SK-N-SH (cell line): ENCODE measurements at regions of chr20 and their contacts with region 1.

Region 1: DNA sequence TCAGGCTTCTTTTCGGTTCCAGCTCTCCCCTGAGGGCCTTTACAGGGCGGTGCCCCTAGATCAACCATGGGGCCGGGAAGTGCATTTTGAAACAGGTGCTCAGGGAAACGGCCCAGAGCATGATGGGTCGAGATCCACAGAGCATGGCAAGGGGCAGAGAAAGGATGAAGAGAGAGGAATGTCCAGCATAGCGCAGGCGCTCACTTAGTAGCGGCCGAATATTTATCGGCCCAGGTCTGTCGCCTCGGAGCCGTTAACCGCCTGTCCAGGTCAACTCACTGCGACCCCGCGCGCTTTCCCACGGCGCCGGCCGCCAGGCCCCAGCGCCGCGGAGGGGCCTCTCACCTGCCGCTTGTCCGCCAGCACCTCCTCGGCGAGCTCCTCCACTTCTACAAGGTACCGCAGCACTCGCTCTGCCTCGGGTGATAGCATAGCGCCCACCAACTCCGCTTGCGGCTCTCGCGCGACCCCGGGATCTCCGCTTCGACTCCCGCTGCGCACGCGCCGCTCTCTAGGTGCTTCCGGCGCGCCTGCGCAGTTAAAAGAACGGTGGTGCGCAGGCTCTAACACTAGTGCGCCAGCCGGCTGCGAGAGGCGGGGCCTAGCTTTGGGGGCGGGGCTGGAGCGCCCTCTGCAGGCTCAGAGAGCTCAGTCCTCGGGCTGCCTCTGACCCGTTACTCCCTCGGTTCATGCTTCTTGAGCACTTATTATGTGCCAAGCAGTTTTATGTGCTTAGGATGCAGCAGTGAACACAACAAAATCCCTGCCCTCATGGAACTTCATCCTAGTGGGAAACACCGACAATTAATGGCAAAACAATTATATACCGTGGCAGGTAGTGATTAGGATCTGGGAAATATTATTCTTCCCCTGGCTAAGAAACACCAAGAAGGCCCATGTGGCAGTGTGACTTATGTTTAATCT is at the start of gene PDRG1:
- DNase-seq: peak; percentile 98
- H3K4me3 ChIP-seq: peak within 1 kb of the TSS; percentile 88 to 91
- H3K27ac ChIP-seq: peak within 1 kb of the TSS; percentile 40 to 75; a peak in 3 of 4 replicates
- H3K4me1 ChIP-seq: peaks cover 7 to 12% of the 10 kb centered on the region in 2 experiments; a peak in 3 of 4 replicates
- H3K27me3 ChIP-seq: no peaks in the 10 kb centered on the region
- CTCF ChIP-seq: peak; percentile 90
- EP300 ChIP-seq: no peak
- RAD21 ChIP-seq: peak; percentile 91
- polyA plus RNA-seq, gene PDRG1: 18.9 and 19.7 TPM in 2 replicates

Region 2: GRCh38 chr20:31835977-31836852 is 115.6 kb before region 1 on chr20:
- CTCF ChIA-PET with region 1: interaction called, 15 read pairs
- POLR2A ChIA-PET with region 1: no interaction called
- DNase-seq: peak; percentile 57
- H3K4me3 ChIP-seq: no peak overlapping the region
- H3K27ac ChIP-seq: peak overlapping the region; percentile 62 to 88; a peak in 3 of 4 replicates
- H3K4me1 ChIP-seq: peaks cover 37 to 51% of the 10 kb centered on the region in 2 experiments
- H3K27me3 ChIP-seq: no peaks in the 10 kb centered on the region
- CTCF ChIP-seq: no peak
- EP300 ChIP-seq: peak in 1 of 2 experiments; percentile 94; a peak in 3 of 4 replicates
- RAD21 ChIP-seq: no peak

Region 3: DNA sequence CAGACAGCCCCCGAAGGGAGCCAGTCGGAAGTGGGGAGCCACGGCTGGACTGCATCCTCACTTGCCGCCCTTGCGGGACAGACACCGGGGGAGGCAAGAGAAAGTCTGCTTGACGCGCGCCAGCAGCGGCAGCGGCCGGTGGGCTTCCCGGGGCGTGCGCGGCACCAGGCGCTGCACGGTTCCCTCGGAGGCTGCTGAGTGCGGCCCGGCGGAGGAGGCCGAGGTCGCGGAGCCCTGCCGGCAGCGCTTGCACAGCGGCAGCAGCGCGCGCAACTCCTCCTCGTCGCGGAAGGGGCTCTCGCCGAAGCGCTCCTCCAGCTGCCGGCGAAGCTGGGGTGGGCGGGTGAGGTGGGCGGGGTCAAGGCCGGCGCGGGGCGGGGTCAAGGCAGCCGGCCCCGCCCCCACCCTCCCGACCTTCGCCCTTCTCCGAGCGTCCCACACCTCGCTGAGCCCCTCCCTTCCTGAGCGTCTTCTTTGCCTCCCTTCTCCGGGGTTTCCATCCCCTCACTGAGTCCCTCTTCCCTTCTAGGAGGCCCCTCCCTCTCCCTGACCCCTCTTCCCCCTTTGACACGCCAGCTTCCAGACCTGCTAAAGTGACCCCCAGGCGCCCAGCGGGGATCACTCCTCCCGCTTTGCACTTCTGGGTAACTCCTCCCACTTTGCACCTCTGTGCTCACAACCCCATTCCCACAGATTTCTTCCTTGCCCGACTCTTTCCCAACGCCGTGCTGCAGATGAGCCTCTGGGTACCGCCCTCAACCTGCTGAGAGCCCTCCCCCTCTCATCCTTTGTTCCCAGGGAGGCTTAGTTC is 90.2 kb before region 1 on chr20:
- CTCF ChIA-PET with region 1: interaction called, 158 read pairs
- POLR2A ChIA-PET with region 1: interaction called, 7 read pairs
- DNase-seq: peak; percentile 99
- H3K4me3 ChIP-seq: peak overlapping the region; percentile 62 to 63
- H3K27ac ChIP-seq: peak overlapping the region in 1 of 2 experiments; percentile 82; a peak in 2 of 4 replicates
- H3K4me1 ChIP-seq: peaks cover 0 to 21% of the 10 kb centered on the region in 2 experiments; a peak in 2 of 4 replicates
- H3K27me3 ChIP-seq: no peaks in the 10 kb centered on the region
- CTCF ChIP-seq: no peak
- EP300 ChIP-seq: no peak
- RAD21 ChIP-seq: no peak

Region 4: DNA sequence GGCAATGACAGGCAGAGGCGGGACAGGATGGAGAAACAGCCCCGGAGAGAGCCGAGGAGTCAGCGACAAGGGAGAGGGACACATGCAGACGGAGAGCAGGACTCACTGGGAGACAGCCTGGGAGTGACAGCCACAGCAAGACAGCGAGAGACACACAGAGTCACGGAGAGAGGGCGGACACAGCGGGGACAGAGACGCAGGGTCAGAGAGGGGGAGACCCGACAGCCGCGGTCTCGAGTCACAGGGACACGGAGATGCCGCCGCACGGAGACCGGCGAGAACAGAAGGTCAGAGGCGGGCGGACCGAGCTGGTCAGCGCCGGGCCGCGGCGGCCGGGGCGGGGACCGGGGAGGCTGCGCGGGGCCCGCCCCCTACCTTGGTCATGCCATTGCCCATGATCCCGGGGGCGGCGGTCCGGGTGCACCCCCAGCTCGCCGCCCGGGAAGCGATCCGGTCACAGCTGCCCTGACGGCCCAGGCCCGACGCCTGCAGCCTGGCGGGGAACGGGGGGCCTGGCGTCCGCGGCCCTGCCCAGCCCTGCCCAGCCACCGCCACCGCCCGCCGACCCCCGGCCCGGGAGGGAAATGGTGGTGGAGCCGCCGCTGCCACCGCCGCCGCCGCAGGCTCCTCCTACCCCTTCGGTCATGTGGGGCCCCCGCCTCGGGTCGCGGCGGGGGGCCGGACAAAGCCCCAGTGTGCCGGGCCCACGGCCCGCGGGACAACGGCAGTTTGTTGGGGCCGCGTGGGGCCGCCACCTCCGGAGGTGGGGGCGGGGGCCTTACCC is 81.7 kb before region 1 on chr20 and contains the starts of genes DUSP15 and TTLL9:
- CTCF ChIA-PET with region 1: interaction called, 16 read pairs
- POLR2A ChIA-PET with region 1: no interaction called
- DNase-seq: peak; percentile 90
- H3K4me3 ChIP-seq: peak within 1 kb of the TSS; percentile 66 to 69
- H3K27ac ChIP-seq: peak within 1 kb of the TSS in 1 of 2 experiments; percentile 62; a peak in 1 of 4 replicates
- H3K4me1 ChIP-seq: peaks cover 0 to 23% of the 10 kb centered on the region in 2 experiments; a peak in 1 of 4 replicates
- H3K27me3 ChIP-seq: no peaks in the 10 kb centered on the region
- CTCF ChIP-seq: no peak
- EP300 ChIP-seq: no peak
- RAD21 ChIP-seq: no peak
- polyA plus RNA-seq, gene DUSP15: 4.3 and 5.4 TPM in 2 replicates
- polyA plus RNA-seq, gene TTLL9: 0.23 and 0.32 TPM in 2 replicates

Region 5: GRCh38 chr20:31962761-31963160 is 11.0 kb after region 1 on chr20:
- CTCF ChIA-PET with region 1: interaction called, 18 read pairs
- POLR2A ChIA-PET with region 1: interaction called, 6 read pairs
- DNase-seq: peak; percentile 48
- H3K4me3 ChIP-seq: no peak overlapping the region
- H3K27ac ChIP-seq: no peak overlapping the region
- H3K4me1 ChIP-seq: peaks cover 0 to 16% of the 10 kb centered on the region in 2 experiments; a peak in 1 of 4 replicates
- H3K27me3 ChIP-seq: peaks cover 49% of the 10 kb centered on the region
- CTCF ChIP-seq: no peak
- EP300 ChIP-seq: no peak
- RAD21 ChIP-seq: no peak

Region 6: DNA sequence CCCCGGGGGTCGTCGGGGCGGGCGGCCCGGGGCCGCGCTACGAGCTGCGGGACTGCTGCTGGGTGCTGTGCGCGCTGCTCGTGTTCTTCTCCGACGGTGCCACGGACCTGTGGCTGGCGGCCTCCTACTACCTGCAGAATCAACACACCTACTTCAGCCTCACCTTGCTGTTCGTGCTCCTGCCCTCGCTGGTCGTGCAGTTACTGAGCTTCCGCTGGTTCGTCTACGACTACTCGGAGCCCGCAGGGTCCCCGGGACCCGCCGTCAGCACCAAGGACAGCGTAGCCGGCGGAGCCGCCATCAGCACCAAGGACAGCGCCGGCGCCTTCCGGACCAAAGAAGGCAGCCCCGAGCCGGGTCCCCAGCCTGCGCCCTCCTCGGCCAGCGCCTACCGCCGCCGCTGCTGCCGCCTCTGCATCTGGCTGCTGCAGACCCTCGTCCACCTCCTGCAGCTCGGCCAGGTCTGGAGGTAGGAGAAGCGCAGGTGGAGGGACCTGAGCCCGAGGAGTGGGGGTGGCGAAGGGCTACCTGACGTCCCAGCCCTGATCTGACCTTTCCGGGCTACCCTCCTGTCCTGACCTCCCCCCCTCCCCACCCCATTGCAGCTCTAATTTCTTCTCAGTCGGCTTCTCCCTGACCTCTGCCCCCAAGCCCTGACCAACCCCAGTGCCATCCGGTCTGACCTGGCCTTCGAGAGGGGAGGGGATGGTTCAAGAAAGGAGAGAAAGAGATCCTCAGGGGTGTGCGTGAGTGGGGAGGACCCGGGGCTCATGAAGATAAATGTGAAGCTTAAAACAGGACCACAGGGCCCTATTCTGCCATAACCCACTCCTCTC is 16.7 kb after region 1 on chr20:
- CTCF ChIA-PET with region 1: interaction called, 18 read pairs
- POLR2A ChIA-PET with region 1: interaction called, 6 read pairs
- DNase-seq: peak; percentile 81
- H3K4me3 ChIP-seq: peak overlapping the region; percentile 55 to 56; a peak in 3 of 4 replicates
- H3K27ac ChIP-seq: peak overlapping the region in 1 of 2 experiments; percentile 75; a peak in 2 of 4 replicates
- H3K4me1 ChIP-seq: peaks cover 0 to 17% of the 10 kb centered on the region in 2 experiments; a peak in 2 of 4 replicates
- H3K27me3 ChIP-seq: peaks cover 30% of the 10 kb centered on the region
- CTCF ChIP-seq: no peak
- EP300 ChIP-seq: peak in 1 of 2 experiments; percentile 24; a peak in 1 of 4 replicates
- RAD21 ChIP-seq: no peak

Region 7: DNA sequence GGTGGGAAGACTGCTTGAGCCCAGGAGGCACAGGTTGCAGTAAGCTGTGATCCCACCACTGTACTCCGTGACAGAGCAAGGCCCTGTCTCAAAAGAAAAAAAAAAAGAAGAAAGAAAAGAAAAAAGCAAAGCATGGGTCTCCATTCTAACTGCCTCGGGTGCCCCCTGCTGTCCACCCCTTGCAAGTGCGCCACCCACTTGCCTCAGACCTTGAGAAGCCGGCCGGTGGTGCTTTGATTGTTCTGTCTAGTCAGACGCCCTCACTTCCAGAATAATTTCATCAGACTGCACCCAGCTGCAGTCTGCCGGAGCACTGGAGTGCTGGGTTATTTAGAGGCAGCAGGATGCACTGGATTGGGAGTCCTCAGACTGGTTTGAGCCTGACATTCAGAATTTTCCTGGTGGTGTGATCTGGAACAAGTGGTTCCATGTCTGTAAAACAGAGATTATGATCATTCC is 140.1 kb after region 1 on chr20:
- CTCF ChIA-PET with region 1: interaction called, 15 read pairs
- POLR2A ChIA-PET with region 1: no interaction called
- DNase-seq: peak; percentile 82
- H3K4me3 ChIP-seq: peak overlapping the region in 1 of 2 experiments; percentile 50; a peak in 1 of 4 replicates
- H3K27ac ChIP-seq: no peak overlapping the region
- H3K4me1 ChIP-seq: no peaks in the 10 kb centered on the region; a peak in 1 of 4 replicates
- H3K27me3 ChIP-seq: peaks cover 10% of the 10 kb centered on the region; the same call in 1 of the 2 replicates
- CTCF ChIP-seq: peak; percentile 95
- EP300 ChIP-seq: no peak
- RAD21 ChIP-seq: peak; percentile 75